Activated CD8-positive, alpha-beta memory T cell treated with anti-CD3 and anti-CD28 coated beads, Interleukin-2, amount 10 ng/mL, durations not matched to agents 7 days and 5 days (primary cell): ENCODE measurements at regions of chrX and their contacts with region 1.

Region 1: DNA sequence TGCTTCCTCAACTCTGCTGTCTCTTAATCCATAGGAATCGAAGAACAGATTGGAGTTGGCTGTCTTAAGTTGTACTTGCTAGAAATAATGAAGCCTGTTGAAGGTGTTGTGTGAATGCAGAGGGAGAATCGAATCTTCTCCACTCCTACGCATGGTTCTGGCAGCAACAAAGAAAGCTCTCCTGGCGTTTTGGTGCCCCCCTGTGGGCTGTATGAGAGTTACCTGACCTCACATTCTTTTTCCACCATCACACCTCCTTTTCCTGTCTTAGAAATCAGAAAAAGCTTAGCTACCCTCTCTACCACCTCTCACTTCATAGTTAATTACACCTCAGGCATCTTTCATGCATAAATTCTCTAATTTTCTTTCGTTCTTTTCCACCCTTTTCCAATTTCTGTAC is 16.3 kb downstream of the KLF8 start:
- DNase-seq: peak; percentile 63
- ATAC-seq: peak; percentile 63
- H3K4me3 Mint-ChIP-seq: no peak overlapping the region
- H3K27ac Mint-ChIP-seq: no peak overlapping the region
- H3K4me1 Mint-ChIP-seq: peaks cover 3% of the 10 kb centered on the region
- H3K27me3 Mint-ChIP-seq: no peaks in the 10 kb centered on the region

Region 2: GRCh38 chrX:56232221-56233082 is 16.0 kb before region 1 on chrX and contains the start of gene KLF8:
- CTCF ChIA-PET with region 1: interaction called, 15 read pairs
- DNase-seq: peak; percentile 52
- ATAC-seq: peak; percentile 90
- H3K4me3 Mint-ChIP-seq: peak within 1 kb of the TSS; percentile 70
- H3K27ac Mint-ChIP-seq: no peak within 1 kb of the TSS
- H3K4me1 Mint-ChIP-seq: peaks cover 6% of the 10 kb centered on the region
- H3K27me3 Mint-ChIP-seq: peaks cover 6% of the 10 kb centered on the region
- total RNA-seq, gene KLF8: 2.5 to 3.4 TPM

Region 3: DNA sequence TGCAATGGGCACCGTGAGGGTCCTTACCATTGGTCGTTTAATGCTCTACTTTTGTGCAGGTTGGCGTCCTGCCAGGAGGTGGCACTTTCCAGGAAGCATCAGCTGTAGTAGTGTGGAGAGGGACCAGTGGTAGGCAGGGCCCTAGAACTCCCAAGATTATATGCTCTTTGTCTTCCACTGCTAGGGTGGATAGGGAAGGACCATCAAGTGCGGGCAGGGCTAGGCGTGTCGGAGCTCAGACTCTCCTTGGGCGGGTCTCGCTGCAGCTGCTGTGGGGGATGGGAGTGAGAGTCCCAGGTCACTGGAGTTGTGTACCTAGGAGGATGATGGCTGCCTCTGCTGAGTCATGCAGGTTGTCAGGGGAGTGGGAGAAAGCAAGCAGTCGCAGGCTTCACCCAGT is 118.4 kb after region 1 on chrX:
- CTCF ChIA-PET with region 1: no interaction called
- DNase-seq: no peak
- ATAC-seq: no peak
- H3K4me3 Mint-ChIP-seq: no peak overlapping the region
- H3K27ac Mint-ChIP-seq: no peak overlapping the region
- H3K4me1 Mint-ChIP-seq: peaks cover 41% of the 10 kb centered on the region
- H3K27me3 Mint-ChIP-seq: no peaks in the 10 kb centered on the region

Region 4: DNA sequence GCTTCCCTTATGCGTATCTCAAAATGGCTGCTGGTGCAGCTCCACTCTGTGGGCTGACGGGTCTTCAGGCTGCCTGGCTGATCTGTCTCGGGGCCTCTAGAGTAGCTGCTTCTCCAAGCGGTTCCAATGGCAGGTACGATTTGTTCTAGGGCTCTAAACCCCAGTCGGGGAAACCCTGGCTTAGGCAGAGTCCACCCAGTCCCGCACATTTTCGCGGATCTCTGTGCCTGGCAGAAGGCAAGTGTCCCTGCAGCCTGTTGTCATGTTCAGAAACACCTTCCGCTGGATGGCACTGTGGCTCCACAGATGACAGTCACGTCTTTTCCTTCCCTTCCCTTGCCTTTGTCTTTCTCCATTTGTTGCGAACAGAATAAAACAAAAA is 534.9 kb after region 1 on chrX:
- CTCF ChIA-PET with region 1: no interaction called
- DNase-seq: no peak
- ATAC-seq: no peak
- H3K4me3 Mint-ChIP-seq: no peak overlapping the region
- H3K27ac Mint-ChIP-seq: no peak overlapping the region
- H3K4me1 Mint-ChIP-seq: peaks cover 13% of the 10 kb centered on the region
- H3K27me3 Mint-ChIP-seq: no peaks in the 10 kb centered on the region